ENCODE measurements at regions of chr5 and their contacts with region 1.

Region 1: DNA sequence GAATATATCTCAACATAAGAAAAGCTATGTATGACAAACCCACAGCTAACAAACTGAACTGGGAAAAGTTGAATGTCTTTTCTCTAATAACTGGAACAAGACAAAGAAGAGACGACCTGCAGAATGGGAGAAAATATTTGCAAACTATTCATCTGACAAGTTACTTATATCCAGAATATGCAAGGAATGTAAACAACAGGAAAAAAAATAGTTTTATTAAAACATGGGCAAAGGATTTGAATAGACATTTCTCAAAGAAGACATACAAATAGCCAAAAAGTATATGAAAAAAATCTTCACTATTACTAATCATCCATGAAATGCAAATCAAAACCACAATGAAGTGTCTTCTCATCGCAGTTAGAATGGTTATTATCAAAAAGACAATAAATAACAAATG is 181.7 kb upstream of the TLX3 start:
- DNase-seq: no peak
- ATAC-seq: no peak
- H3K4me3 Mint-ChIP-seq: no peak overlapping the region
- H3K27ac Mint-ChIP-seq: no peak overlapping the region
- H3K4me1 Mint-ChIP-seq: no peaks in the 10 kb centered on the region
- H3K27me3 Mint-ChIP-seq: peaks cover 6% of the 10 kb centered on the region

Region 2: DNA sequence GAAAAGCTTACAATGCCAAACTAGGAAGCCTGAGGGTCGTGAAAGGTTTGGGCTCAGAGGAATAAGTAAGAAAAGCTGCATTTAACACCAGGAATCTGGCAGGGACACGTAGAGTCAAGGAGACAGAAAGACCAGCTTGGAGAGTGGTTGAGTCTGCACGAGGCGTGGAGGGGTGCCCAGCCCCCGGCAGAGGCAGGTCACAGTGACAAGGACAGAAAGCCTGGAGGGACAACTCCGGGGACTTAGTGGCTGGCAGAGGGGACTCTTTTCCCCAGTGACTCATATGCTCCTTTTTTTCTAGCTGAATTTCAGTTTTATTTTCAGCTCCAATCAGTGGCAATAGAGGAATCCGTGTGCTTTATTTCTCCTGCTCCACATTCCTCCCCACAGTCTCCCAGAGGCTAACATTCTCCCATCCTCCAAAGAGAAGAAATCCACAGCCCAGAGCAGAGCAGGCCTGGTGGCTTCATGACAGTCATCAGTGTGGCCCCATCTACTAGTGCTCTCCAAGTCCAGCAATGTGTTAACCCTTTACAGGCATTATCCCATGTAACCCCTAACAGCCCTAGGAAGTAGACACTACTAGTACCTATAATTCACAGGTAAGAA is 542.8 kb before region 1 on chr5:
- CTCF ChIA-PET with region 1: no interaction called
- POLR2A ChIA-PET with region 1: interaction called, 10 read pairs
- intact Hi-C with region 1: no loop called
- DNase-seq: no peak
- ATAC-seq: no peak
- H3K4me3 Mint-ChIP-seq: no peak overlapping the region
- H3K27ac Mint-ChIP-seq: no peak overlapping the region
- H3K4me1 Mint-ChIP-seq: no peaks in the 10 kb centered on the region
- H3K27me3 Mint-ChIP-seq: peaks cover 59% of the 10 kb centered on the region

Region 3: DNA sequence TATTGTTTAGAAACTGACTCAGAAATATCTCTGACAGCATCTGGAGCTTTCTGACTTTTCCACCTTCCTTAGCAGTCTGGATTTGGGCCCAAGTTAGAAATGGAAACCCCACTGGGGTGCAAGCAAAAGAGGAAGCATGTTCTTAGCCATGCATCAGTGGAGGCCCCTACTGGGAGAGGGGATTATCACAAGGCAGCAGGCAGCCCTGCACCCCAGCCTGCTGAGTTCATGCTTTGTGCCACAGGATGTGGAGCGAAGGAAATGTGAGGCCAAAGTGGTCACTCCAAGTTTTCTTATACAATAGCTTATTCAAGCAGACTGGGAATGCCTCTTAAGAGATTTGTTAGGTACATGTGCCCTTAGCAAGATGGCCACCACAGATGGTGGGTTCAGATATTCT is 35.3 kb after region 1 on chr5:
- CTCF ChIA-PET with region 1: no interaction called
- POLR2A ChIA-PET with region 1: no interaction called
- intact Hi-C with region 1: no loop called
- DNase-seq: peak; percentile 11
- ATAC-seq: no peak
- H3K4me3 Mint-ChIP-seq: no peak overlapping the region
- H3K27ac Mint-ChIP-seq: no peak overlapping the region
- H3K4me1 Mint-ChIP-seq: no peaks in the 10 kb centered on the region
- H3K27me3 Mint-ChIP-seq: peaks cover 4% of the 10 kb centered on the region